OCI-LY7 (cell line): ENCODE measurements at regions of chr2 and their contacts with region 1.

Region 1: GRCh38 chr2:53970724-53971602 is at the start of gene PSME4:
- DNase-seq: peak; percentile 91
- H3K4me3 ChIP-seq: peak within 1 kb of the TSS; percentile 96
- H3K27ac ChIP-seq: peak within 1 kb of the TSS; percentile 60
- H3K4me1 ChIP-seq: peaks cover 24% of the 10 kb centered on the region
- CTCF ChIP-seq: no peak
- total RNA-seq, gene PSME4: 38.0 and 38.8 TPM in 2 replicates

Region 2: DNA sequence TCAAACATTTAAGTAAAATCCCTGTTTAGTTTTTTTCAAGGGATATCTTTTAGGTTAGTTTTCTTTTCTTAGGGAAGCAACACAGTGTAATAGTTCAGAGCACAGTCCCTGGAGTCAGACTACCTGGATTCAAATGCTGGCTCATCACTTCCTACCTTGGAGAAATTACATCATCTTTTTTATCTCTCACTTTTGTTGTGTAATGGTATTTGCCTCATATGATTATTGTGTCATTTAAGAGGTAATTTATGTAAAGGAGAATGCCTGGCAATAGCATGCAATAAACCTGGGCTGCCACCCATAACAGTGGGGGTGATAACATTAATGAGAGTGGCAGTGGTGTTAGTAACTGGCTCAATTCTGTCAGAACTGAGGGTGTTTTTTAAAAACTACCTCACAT is 157.8 kb before region 1 on chr2:
- CTCF ChIA-PET with region 1: no interaction called
- POLR2A ChIA-PET with region 1: no interaction called
- intact Hi-C with region 1: no loop called
- DNase-seq: no peak
- H3K4me3 ChIP-seq: no peak overlapping the region
- H3K27ac ChIP-seq: no peak overlapping the region
- H3K4me1 ChIP-seq: no peaks in the 10 kb centered on the region
- CTCF ChIP-seq: no peak

Region 3: GRCh38 chr2:53880756-53881155 is 90.2 kb before region 1 on chr2:
- CTCF ChIA-PET with region 1: no interaction called
- POLR2A ChIA-PET with region 1: no interaction called
- intact Hi-C with region 1: no loop called
- DNase-seq: no peak
- H3K4me3 ChIP-seq: no peak overlapping the region
- H3K27ac ChIP-seq: no peak overlapping the region
- H3K4me1 ChIP-seq: no peaks in the 10 kb centered on the region
- CTCF ChIP-seq: no peak

Region 4: DNA sequence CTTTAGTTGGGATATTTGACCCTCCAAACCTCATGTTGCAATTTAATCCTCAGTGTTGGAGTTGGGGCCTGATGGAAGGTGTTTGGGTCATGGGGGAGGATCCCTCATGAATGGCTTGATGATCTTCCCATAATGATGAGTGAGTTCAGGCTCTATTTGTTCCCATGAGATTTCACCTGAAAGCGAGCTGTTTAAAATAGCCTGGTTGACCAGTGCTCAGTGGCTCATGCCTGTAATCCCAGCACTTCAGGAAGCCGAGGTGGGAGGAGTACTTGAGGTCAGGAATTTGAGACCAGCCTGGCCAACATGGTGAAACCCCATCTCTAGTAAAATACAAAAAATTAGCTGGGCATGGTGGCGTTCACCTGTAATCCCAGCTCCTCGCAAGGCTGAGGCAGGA is 14.7 kb after region 1 on chr2:
- CTCF ChIA-PET with region 1: no interaction called
- POLR2A ChIA-PET with region 1: interaction called, 19 read pairs
- intact Hi-C with region 1: no loop called
- DNase-seq: no peak
- H3K4me3 ChIP-seq: no peak overlapping the region
- H3K27ac ChIP-seq: no peak overlapping the region
- H3K4me1 ChIP-seq: peaks cover 8% of the 10 kb centered on the region
- CTCF ChIP-seq: no peak

Region 5: GRCh38 chr2:54099829-54100585 is 129.0 kb after region 1 on chr2:
- CTCF ChIA-PET with region 1: no interaction called
- POLR2A ChIA-PET with region 1: interaction called, 24 read pairs
- intact Hi-C with region 1: loop called (anchors 1 kb)
- DNase-seq: peak; percentile 97
- H3K4me3 ChIP-seq: peak overlapping the region; percentile 40
- H3K27ac ChIP-seq: peak overlapping the region; percentile 95
- H3K4me1 ChIP-seq: peaks cover 79% of the 10 kb centered on the region
- CTCF ChIP-seq: no peak

Region 6: DNA sequence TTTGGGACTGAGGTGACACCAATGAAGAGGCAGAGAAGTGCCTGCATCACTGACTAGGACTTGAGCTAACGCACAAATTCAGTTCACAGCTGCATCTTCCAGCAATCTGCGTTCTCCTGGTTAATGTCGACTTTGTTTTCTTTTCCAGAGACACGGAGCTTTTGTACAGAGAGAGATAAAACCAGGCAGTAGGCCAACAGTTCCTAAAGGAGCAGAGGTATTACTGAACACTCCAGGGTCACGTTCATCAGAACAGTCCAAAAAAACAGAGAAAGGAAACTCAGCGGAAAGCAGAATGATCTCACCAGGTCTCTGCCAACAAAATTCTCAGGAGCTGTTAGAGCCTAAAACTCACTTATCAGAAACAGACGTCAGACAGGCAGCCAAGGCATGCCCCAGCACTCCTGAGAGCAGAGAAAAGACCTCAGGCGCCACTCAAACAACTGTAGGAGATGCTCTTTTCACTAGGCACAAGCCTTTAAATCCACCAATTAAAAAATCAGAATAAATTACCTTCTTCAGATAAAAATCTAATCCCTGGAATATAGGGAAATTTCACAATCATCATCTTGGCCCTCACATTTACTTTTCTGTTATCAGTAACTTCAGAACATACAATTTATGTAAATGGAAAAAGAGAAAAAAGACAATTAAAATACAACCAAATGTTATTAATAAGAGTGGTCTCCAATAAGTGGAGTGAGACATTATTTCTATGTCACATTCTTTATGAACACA is 389.3 kb after region 1 on chr2:
- CTCF ChIA-PET with region 1: no interaction called
- POLR2A ChIA-PET with region 1: no interaction called
- intact Hi-C with region 1: no loop called
- DNase-seq: no peak
- H3K4me3 ChIP-seq: no peak overlapping the region
- H3K27ac ChIP-seq: no peak overlapping the region
- H3K4me1 ChIP-seq: no peaks in the 10 kb centered on the region
- CTCF ChIP-seq: no peak